HEK293 (cell line): ENCODE measurements at regions of chr12 and their contacts with region 1.

Region 1: GRCh38 chr12:132414634-132415326 is 75.2 kb upstream of the FBRSL1 start:
- H3K4me3 ChIP-seq: no peak overlapping the region
- H3K27ac ChIP-seq: no peak overlapping the region
- H3K4me1 ChIP-seq: no peaks in the 10 kb centered on the region
- CTCF ChIP-seq: peak; percentile 93

Region 2: DNA sequence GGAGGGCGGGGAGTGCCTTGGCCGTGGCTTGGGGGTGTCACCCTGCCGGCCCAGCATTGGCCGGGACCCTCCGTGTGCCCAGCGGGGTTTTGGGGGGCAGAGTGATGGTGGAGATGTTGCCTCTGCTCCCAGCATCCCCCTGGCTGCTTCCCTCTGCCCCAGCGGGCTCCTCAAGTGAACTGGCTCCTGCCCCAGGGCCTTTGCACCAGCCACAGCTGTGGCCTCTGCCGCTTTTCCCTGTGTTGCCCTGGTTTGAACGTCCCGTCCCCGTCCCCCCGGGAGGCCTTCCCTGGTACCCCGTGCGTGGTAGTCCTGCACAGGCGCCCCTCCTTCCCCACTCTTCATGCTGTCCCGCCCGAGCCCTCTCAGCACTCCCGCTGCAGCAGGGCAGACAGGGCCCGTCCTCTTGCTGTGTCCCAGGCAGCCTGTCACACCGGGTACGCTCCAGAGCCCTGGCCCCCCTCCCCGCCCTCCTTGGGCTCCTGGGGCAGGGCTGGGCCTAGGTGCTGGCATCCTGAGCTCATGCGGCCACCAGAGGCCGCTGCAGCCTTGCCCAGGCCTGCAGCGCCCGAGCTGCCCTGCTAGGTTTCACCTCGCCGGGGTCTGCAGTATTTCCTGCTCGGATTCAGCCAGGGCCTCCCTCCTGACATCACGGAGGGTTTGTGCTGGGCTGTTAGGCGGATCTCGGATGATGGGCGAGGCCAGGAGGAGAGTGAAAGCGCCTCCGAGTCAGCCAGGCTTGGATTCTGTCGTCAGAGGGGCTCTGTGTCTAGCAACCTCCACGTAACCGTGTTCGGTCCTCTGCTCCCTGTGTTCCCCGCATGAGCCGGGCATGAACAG is 261.1 kb before region 1 on chr12:
- CTCF ChIA-PET with region 1: interaction called, 33 read pairs
- POLR2A ChIA-PET with region 1: interaction called, 9 read pairs
- H3K4me3 ChIP-seq: no peak overlapping the region
- H3K27ac ChIP-seq: no peak overlapping the region
- H3K4me1 ChIP-seq: no peaks in the 10 kb centered on the region
- CTCF ChIP-seq: peak; percentile 94

Region 3: DNA sequence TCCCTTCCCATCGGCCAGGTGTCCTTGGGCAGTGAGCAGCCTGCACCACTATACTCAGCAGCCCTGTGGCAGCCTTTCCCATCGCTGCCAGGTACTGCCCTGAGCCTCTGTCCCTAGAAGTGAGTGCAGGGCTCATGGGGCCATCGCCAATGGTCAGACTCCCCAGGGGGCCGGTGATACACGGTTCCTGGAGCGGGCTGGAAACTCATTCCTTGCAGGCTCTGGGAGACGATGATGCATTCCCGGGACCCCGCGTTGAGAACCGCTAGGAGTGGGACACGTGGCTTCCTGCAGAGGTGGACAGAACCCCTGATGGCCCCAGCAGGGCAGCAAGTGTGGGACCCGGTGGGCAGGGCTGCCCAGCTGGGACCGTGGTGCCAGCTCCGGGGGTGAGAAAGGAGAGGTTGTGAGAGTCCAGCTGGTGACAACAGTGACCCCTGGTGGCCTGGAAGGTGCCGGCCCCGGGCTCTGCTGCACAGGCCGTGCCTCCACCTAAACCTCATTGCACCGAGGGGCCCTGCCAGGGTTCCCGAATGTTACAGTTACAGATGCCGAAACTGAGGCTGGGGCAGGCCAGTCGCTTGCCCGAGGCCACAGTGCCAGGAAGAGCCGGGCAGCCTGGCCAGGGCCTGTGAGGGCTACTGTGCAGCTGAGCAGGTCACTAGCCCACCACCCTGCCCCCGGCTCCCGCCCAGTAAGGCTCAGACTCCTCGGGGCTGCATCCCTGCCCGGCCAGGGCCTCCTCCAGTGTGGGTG is 109.0 kb after region 1 on chr12:
- CTCF ChIA-PET with region 1: interaction called, 17 read pairs
- POLR2A ChIA-PET with region 1: no interaction called
- H3K4me3 ChIP-seq: no peak overlapping the region
- H3K27ac ChIP-seq: no peak overlapping the region
- H3K4me1 ChIP-seq: no peaks in the 10 kb centered on the region
- CTCF ChIP-seq: peak; percentile 87

Region 4: DNA sequence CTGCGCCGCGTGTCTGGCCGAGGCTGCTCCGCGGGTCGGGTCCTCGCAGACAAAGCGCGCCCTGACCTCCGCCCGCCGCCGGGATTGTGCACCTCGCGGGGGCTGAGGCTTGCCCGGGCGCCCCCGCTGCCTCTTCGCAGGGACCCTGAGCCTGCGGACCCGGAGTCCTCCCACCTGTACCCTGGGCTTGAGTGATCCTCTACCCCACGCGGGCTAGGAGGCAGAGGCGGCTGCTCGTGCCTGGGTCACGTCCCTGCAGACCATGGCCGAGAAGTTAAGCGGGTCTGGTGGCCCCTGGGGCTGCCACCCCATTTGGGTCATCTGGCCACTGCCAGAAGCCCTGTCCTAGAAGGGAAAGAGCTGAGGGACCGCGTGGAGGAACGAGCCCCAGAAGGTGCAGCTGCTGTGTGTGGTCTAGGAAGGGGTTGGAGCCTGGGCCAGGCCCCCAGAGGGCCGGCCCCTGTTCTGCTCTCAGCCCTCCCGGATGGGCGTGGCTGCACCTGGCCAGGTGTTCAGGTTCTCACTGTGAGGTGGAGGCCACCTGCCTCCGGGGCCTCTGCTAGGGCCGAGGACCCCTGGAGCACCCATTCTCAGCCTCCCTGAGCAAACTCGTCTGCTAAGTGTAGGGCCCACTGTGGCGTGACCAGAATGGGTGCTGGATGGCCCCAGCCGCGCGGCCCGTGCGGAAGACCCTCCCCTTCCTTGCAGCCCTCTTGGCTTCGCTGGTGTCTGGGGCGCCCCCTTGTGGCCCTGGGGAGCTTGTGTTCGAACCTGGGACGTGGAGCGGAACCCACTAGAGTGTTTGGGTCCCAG is 146.0 kb after region 1 on chr12:
- CTCF ChIA-PET with region 1: interaction called, 34 read pairs
- POLR2A ChIA-PET with region 1: interaction called, 3 read pairs
- H3K4me3 ChIP-seq: peak overlapping the region; percentile 59
- H3K27ac ChIP-seq: peak overlapping the region; percentile 79; the same call in 1 of the 2 replicates
- H3K4me1 ChIP-seq: peaks cover 4% of the 10 kb centered on the region
- CTCF ChIP-seq: peak; percentile 93

Region 5: GRCh38 chr12:132614861-132615578 is 200.2 kb after region 1 on chr12:
- CTCF ChIA-PET with region 1: interaction called, 68 read pairs
- POLR2A ChIA-PET with region 1: no interaction called
- H3K4me3 ChIP-seq: no peak overlapping the region
- H3K27ac ChIP-seq: no peak overlapping the region
- H3K4me1 ChIP-seq: no peaks in the 10 kb centered on the region
- CTCF ChIP-seq: peak; percentile 76

Region 6: DNA sequence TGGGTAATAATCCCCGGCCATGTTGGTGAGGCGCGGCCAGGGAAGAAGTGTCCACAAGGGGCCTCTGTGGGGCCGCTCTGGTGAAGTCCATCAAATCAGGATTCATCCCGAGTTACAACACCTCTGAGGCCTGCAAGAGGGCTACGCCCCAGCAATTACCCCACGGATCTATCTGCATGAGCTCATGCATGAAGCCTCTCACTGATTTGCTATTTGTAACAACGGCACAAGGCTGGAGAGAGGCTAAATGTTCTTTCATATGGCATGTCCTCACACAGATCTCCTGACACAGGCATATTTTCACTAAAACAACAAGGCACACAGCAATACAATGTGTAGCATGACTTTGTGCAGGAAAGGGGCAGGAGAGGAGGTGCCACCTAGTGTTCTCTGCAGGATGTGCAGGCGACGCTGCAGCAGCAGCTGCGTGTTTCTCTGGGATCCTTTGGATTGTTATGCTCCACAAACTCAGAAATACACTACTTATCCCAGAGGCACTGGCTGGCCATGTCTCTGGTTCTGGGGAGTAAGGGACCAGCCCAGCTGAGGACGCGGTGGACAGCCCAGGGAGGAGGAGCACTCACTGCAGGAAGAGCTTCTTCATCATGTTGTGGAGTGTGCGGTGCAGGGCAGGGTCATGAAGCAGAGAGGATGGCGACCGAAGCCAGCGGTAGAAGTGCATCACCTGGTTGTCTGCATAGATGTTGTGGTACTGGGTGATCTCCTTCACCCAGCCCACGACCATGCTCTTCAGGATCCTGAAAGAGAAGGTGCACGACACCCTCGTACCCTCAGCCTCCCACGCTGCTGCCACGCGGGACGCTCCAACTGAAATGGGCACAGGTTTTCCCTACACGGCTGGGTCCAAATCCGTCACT is 224.0 kb after region 1 on chr12:
- CTCF ChIA-PET with region 1: interaction called, 11 read pairs
- POLR2A ChIA-PET with region 1: no interaction called
- H3K4me3 ChIP-seq: no peak overlapping the region
- H3K27ac ChIP-seq: no peak overlapping the region
- H3K4me1 ChIP-seq: no peaks in the 10 kb centered on the region
- CTCF ChIP-seq: peak; percentile 74